GM13976 (cell line): ENCODE measurements at regions of chr4 and their contacts with region 1.

Region 1: GRCh38 chr4:77240469-77241066 is 83.6 kb downstream of the CCNG2 start:
- DNase-seq: peak; percentile 39
- CTCF ChIP-seq: peak; percentile 69

Region 2: GRCh38 chr4:77169481-77169880 is 71.1 kb before region 1 on chr4:
- in situ Hi-C with region 1: no loop called
- DNase-seq: no peak
- CTCF ChIP-seq: no peak

Region 3: DNA sequence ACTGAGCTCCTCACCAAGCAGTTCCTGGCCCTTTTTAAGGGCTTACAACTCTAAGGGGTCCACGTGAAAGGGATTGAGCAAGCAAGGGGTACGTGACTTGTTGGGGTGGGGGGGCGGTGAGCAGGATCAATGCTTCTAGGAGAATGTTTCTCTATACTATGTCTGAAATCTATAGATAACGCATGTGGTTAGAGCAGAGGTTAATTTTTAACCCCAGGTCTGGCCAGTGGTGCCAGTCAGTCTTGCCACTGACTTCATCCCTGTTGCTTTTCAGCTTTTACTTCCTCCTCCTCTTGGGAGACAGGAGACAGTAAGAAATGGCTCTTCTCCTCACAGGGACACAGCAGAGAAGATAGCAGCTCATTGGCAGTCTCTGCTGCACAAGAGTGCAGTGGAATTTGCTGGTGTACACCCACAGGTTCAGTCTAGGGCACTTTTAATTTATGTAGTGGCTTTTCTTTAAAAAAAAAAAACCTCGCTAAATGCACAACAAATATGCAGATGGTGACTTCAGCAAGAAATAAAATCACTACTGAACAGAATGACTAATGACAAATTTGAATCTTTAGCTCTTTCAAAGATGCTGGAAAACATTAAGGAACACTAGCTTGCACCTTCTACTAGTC is 106.9 kb after region 1 on chr4:
- in situ Hi-C with region 1: no loop called
- DNase-seq: no peak
- CTCF ChIP-seq: no peak

Region 4: DNA sequence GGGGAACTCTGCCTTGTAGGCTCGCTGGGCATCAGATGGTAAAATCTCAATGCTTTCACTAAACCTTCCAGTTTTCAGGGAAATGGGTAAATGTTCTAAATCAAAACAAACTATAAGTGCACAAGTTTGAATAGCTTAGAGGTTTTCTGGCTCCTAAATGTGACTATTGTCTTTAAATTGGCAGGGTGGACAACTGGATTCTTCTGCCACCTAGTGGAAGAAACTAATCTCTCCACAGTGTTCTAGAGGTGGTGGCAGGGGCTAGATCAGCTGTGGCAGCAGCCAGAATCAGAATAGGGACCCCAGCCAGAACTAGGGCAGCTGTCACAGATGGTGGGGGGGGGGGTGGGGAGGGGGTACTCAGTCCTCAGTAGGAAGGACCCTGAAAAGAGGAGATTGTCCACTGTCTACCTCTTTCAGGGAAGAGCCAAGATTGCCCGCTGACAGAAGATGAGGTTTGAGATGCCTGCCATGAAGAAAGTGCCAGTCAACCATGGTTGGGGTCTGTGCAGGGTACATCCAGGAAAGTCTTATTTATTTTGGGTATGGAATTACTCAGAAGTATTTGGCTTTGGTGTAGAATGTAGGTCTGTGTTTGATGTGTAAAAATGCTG is 117.9 kb after region 1 on chr4:
- in situ Hi-C with region 1: loop called (anchors 5 kb)
- DNase-seq: peak; percentile 42
- CTCF ChIP-seq: peak; percentile 56

Region 5: DNA sequence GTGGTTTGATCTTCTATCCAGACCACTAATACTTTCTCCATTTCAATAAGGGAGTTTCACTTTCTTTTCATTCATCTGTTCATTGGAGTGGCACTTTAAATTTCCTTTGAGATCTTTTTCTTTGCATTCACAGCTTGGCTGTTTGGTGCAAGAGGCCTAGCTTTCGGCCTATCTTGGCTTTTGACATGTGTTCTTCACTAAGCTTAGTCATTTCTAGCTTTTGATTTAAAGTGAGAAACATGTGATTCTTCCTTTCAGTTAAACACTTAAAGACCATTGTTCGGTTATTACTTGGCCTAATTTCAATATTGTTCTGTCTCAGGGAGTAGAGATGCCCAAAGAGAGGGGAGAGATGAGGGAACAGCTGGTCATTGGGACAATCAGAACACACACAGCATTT is 389.3 kb after region 1 on chr4:
- in situ Hi-C with region 1: no loop called
- DNase-seq: peak; percentile 28
- CTCF ChIP-seq: no peak